Mammary epithelial cell (primary cell): ENCODE measurements at regions of chr11 and their contacts with region 1.

Region 1: DNA sequence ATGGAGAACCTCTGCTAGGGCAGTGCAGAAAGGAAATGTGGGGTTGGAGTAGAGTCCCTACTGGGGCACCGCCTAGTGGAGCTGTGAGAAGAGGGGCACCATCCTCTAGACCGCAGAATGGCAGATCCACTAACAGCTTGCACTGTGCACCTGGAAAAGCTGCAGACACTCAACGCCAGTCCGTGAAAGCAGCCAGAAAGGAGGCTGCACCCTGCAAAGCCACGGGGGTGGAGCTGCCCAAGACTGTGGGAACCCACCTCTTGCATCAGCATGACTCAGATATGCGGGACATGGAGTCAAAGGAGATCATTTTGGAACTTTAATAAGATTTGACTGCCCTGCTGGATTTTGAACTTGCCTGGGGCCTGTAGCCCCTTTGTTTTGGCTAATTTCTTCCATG is 8.7 kb downstream of the TSKU start:
- DNase-seq: peak; percentile 75
- H3K4me3 ChIP-seq: no peak overlapping the region
- H3K27ac ChIP-seq: no peak overlapping the region
- H3K4me1 ChIP-seq: peaks cover 63% of the 10 kb centered on the region
- H3K27me3 ChIP-seq: no peaks in the 10 kb centered on the region
- CTCF ChIP-seq: no peak

Region 2: DNA sequence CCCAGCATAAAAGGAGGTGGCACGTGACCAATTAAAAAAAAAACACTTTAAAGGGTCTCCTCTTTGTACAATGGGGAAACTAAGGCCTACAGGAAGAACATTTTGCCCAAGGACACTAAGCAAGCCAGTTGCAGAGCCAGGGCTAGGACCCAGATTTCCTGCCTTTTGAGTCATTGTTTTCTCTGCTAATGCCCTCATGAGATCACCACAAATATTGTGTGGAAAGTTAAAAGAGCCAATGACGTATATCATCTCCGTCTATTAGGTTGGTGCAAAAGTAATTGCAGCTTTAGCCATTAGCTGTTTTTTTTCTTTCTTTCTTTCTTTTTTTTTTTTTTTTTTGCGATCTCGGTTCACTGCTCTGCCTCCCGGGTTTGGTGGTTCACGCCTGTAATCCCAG is 97.2 kb before region 1 on chr11:
- CTCF ChIA-PET with region 1: no interaction called
- dilution Hi-C with region 1: loop called (anchors 5 kb)
- in situ Hi-C with region 1: no loop called
- intact Hi-C with region 1: no loop called
- DNase-seq: peak; percentile 37
- H3K4me3 ChIP-seq: no peak overlapping the region
- H3K27ac ChIP-seq: no peak overlapping the region
- H3K4me1 ChIP-seq: no peaks in the 10 kb centered on the region
- H3K27me3 ChIP-seq: no peaks in the 10 kb centered on the region
- CTCF ChIP-seq: no peak

Region 3: DNA sequence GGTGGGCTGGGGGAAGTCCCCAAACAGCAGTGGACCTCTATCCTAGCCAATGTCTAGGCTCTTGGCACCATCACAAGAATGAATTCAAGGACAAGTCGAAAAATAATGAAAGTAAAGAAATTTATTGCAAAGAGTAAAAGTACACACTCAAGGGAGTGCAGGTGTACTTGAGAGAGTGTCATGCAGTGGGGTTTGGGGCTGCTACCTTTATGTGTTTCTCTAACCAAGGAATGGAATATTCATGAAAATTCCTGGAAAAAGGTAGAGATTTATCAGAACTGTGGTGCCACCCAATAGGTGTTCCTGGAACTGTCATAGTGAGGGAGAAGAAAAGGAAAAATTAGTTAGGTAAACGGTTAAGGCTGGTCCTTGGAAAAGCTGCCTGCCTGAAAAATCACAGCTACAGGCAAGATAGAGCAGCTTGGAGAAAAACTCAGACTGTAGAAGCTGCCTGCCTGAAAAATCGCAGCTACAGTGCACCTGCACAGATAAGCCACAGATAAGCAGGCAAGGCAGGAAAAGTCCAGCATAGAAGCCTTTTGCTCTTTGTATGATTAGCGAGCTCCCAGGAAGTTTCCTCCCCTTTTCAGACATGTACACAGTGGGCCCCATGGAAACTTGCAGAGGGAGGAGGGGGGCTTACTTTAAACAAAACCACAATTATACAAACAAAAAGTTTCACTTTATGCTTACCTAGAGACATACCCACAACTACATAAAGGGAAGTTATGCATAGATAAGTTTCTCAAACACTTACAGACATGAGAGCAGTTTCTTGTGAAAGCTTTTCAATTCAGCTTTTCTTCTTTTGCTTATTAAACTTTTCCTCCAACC is 170.9 kb after region 1 on chr11:
- CTCF ChIA-PET with region 1: no interaction called
- dilution Hi-C with region 1: no loop called
- in situ Hi-C with region 1: no loop called
- intact Hi-C with region 1: no loop called
- DNase-seq: no peak
- H3K4me3 ChIP-seq: no peak overlapping the region
- H3K27ac ChIP-seq: no peak overlapping the region
- H3K4me1 ChIP-seq: no peaks in the 10 kb centered on the region
- H3K27me3 ChIP-seq: no peaks in the 10 kb centered on the region
- CTCF ChIP-seq: no peak

Region 4: GRCh38 chr11:77223797-77224196 is 431.9 kb after region 1 on chr11:
- CTCF ChIA-PET with region 1: no interaction called
- dilution Hi-C with region 1: no loop called
- in situ Hi-C with region 1: no loop called
- intact Hi-C with region 1: no loop called
- DNase-seq: no peak
- H3K4me3 ChIP-seq: no peak overlapping the region
- H3K27ac ChIP-seq: no peak overlapping the region
- H3K4me1 ChIP-seq: no peaks in the 10 kb centered on the region
- H3K27me3 ChIP-seq: no peaks in the 10 kb centered on the region
- CTCF ChIP-seq: no peak